B cell (primary cell): ENCODE measurements at regions of chr5 and their contacts with region 1.

Region 1: DNA sequence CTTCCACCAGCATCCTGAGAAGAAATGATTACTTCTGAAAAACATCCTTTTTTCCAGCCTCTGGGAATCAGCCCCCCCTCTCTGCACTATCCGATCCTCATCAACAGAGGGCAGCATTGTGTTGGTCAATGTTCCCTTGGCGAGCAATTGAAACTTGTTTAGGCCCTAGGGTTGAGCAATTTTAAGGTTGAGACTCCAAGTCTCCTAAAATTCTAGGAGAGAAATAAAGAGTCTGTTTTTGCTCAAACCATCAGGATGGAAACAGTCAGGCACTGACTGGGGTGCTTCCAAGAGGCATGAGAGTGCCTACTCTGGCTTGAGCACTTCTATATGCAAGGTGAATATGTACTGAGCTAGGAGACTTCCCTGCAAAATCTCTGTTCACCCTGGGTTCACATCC is 12.4 kb upstream of the CYFIP2 start:
- DNase-seq: peak; percentile 75
- ATAC-seq: peak; percentile 91
- H3K4me3 ChIP-seq: peak overlapping the region in 2 of 5 experiments; percentile 13 to 34
- H3K4me3 Mint-ChIP-seq: peak overlapping the region; percentile 71
- H3K27ac ChIP-seq: no peak overlapping the region
- H3K27ac Mint-ChIP-seq: peak overlapping the region; percentile 82
- H3K4me1 ChIP-seq: peaks cover 21 to 23% of the 10 kb centered on the region in 2 donors
- H3K4me1 Mint-ChIP-seq: peaks cover 29% of the 10 kb centered on the region
- H3K27me3 ChIP-seq: no peaks in the 10 kb centered on the region
- H3K27me3 Mint-ChIP-seq: no peaks in the 10 kb centered on the region
- CTCF ChIP-seq: peak; percentile 96

Region 2: DNA sequence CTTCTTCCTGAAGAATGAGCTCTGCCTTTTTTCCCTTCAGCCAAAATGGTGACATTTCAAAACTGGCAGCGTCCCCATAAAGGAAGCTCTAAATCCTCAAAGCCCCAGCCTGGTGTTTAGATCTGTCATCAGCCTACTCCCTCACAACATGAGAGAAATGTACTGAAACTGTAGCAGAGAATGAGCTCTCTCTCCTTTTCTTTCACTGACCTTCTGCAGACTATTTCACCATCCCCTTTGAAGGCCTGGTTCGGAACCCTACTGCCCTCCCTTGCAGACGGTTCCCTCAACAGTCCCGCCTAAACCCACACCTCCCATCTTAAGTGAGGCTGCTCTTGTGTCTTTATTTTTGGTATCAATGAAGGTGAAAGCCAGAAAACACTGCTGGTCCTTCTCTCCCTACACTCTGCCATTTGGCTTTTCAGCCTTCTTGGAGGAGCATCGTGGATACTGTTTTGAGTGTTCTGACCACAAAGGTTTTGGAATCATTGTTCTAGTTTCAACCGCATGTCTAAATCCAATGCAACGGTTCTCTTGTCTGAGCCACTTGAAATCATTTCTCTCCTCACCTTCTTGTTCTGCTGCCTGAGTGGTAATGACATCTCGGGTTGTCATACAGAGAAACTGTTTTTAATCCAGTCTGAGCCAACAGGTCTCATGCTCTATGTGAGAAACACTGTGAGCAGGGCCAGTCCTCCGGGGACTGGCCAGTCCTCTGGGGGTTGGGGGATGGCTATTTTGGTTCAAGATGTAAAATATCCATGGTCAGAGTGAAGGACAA is 33.9 kb before region 1 on chr5:
- CTCF ChIA-PET with region 1: interaction called, 16 read pairs
- POLR2A ChIA-PET with region 1: no interaction called
- intact Hi-C with region 1: loop called (anchors 5 kb)
- DNase-seq: no peak
- ATAC-seq: no peak
- H3K4me3 ChIP-seq: no peak overlapping the region
- H3K4me3 Mint-ChIP-seq: no peak overlapping the region
- H3K27ac ChIP-seq: no peak overlapping the region
- H3K27ac Mint-ChIP-seq: no peak overlapping the region
- H3K4me1 ChIP-seq: peaks cover 40 to 42% of the 10 kb centered on the region in 2 donors
- H3K4me1 Mint-ChIP-seq: peaks cover 52% of the 10 kb centered on the region
- H3K27me3 ChIP-seq: no peaks in the 10 kb centered on the region
- H3K27me3 Mint-ChIP-seq: no peaks in the 10 kb centered on the region
- CTCF ChIP-seq: no peak

Region 3: DNA sequence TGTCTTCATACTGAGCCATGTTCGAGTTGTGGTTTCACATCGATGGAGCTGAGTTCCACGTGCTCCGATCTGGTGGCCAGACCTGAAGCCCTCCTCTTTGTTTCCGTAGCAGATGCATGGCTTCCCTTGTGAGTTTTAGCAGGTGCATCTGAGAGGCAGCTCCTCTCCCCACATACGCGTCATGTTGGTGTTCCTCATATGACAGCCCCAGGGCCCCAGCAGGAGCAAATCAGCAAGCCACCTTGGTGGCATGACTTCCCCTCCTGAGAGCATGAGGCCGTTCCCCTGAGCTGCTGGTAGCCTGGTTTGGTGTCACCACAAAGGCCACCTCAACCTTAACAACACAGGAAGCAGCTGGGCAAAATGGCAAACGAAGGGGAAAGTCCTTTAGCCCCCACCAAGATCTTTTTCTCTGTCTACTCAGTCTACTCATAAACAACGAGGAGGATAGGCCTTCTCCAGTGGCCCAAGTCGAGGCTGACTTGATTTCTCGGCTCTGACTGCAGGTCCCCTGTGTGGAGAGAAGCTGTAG is 18.3 kb after region 1 on chr5:
- CTCF ChIA-PET with region 1: interaction called, 99 read pairs
- POLR2A ChIA-PET with region 1: interaction called, 6 read pairs
- intact Hi-C with region 1: no loop called
- DNase-seq: peak; percentile 98
- ATAC-seq: peak; percentile 89
- H3K4me3 ChIP-seq: peak overlapping the region in 3 of 5 experiments; percentile 4 to 39 (median 32)
- H3K4me3 Mint-ChIP-seq: peak overlapping the region; percentile 82
- H3K27ac ChIP-seq: peak overlapping the region; percentile 99
- H3K27ac Mint-ChIP-seq: peak overlapping the region; percentile 99
- H3K4me1 ChIP-seq: peaks cover 81 to 92% of the 10 kb centered on the region in 2 donors
- H3K4me1 Mint-ChIP-seq: peaks cover 90% of the 10 kb centered on the region
- H3K27me3 ChIP-seq: no peaks in the 10 kb centered on the region
- H3K27me3 Mint-ChIP-seq: no peaks in the 10 kb centered on the region
- CTCF ChIP-seq: no peak

Region 4: DNA sequence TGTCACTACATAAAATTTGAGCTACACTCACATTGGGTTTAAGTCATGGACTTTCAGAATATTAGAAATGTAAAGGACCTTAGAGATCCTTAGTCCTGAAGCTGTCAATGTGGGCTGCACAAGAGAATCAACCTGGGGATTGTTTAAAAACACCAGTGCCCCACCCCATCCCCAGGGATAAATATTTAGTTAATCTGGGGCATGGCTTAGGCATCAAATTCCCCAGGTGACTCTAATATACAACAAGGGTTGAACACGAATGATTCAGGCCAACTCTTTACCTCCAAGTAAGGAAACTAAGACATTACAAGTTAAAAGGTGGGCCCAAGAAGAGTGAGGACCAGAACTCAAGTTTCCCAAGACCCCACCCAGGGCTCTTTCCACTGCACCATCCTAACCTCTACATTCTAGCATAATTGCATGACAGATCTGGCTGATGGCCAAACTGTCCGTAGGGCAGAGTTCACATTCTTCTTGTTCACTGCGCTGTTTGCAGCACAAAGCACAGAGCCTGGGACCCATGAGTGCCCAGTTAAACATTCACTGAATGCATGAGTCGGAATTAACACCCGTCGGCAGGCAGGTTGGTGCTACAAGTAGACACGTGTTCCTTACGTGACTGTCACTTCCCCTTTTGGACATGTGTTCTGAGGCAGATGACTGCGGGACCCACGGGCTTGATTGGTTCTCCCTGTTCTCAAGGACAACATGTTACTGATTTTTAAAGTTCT is 37.6 kb after region 1 on chr5:
- CTCF ChIA-PET with region 1: interaction called, 321 read pairs
- POLR2A ChIA-PET with region 1: no interaction called
- intact Hi-C with region 1: loop called (anchors 2 kb)
- DNase-seq: peak; percentile 85
- ATAC-seq: peak; percentile 93
- H3K4me3 ChIP-seq: no peak overlapping the region
- H3K4me3 Mint-ChIP-seq: peak overlapping the region; percentile 60
- H3K27ac ChIP-seq: peak overlapping the region; percentile 72
- H3K27ac Mint-ChIP-seq: peak overlapping the region; percentile 92
- H3K4me1 ChIP-seq: peaks cover 13 to 21% of the 10 kb centered on the region in 2 donors
- H3K4me1 Mint-ChIP-seq: peaks cover 46% of the 10 kb centered on the region
- H3K27me3 ChIP-seq: no peaks in the 10 kb centered on the region
- H3K27me3 Mint-ChIP-seq: no peaks in the 10 kb centered on the region
- CTCF ChIP-seq: no peak

Region 5: DNA sequence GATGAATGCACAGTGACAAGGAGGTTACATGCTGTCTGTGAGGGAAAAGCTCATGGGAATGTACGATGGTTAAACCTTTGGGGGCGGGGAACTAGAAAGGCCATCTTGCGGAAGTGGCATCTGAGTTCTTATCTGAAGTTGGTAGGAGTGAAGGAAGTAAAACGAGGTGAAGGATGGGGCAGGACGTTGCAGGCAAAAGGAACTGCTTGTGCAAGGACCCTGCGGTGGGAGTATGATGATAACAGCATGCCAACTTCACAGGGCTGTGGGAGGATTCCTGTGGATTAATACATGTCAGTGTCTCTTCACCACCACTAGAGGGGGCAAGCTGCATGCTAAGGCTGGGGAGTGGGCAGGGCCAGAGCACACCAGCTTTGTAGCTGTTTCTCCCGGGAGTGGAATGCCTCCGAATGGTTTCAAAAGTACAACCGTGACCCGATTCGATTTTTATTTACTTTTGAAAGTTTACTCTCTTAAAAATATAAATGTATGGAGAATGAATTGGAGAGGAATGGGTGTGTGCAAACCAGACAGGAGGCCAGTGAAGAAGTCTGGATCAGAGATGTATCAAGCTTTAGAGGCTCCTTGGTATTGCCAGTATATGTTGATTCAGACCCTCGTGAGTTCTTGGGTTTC is 74.8 kb after region 1 on chr5:
- CTCF ChIA-PET with region 1: interaction called, 495 read pairs
- POLR2A ChIA-PET with region 1: no interaction called
- intact Hi-C with region 1: no loop called
- DNase-seq: peak; percentile 78
- ATAC-seq: peak; percentile 98
- H3K4me3 ChIP-seq: no peak overlapping the region
- H3K4me3 Mint-ChIP-seq: no peak overlapping the region
- H3K27ac ChIP-seq: no peak overlapping the region
- H3K27ac Mint-ChIP-seq: no peak overlapping the region
- H3K4me1 ChIP-seq: no peaks in the 10 kb centered on the region
- H3K4me1 Mint-ChIP-seq: peaks cover 6% of the 10 kb centered on the region
- H3K27me3 ChIP-seq: no peaks in the 10 kb centered on the region
- H3K27me3 Mint-ChIP-seq: no peaks in the 10 kb centered on the region
- CTCF ChIP-seq: peak; percentile 96